ENCODE measurements at regions of chr6 and their contacts with region 1.

Region 1: GRCh38 chr6:168956884-168957730 is 296.5 kb downstream of the THBS2 start:
- DNase-seq: peak; percentile 63 to 76
- H3K4me3 ChIP-seq: no peak overlapping the region
- H3K4me3 Mint-ChIP-seq: no peak overlapping the region
- H3K27ac Mint-ChIP-seq: no peak overlapping the region
- H3K4me1 ChIP-seq: no peaks in the 10 kb centered on the region
- H3K4me1 Mint-ChIP-seq: no peaks in the 10 kb centered on the region
- H3K27me3 ChIP-seq: no peaks in the 10 kb centered on the region
- H3K27me3 Mint-ChIP-seq: peaks cover 7% of the 10 kb centered on the region
- CTCF ChIP-seq: peak; percentile 67 to 81

Region 2: DNA sequence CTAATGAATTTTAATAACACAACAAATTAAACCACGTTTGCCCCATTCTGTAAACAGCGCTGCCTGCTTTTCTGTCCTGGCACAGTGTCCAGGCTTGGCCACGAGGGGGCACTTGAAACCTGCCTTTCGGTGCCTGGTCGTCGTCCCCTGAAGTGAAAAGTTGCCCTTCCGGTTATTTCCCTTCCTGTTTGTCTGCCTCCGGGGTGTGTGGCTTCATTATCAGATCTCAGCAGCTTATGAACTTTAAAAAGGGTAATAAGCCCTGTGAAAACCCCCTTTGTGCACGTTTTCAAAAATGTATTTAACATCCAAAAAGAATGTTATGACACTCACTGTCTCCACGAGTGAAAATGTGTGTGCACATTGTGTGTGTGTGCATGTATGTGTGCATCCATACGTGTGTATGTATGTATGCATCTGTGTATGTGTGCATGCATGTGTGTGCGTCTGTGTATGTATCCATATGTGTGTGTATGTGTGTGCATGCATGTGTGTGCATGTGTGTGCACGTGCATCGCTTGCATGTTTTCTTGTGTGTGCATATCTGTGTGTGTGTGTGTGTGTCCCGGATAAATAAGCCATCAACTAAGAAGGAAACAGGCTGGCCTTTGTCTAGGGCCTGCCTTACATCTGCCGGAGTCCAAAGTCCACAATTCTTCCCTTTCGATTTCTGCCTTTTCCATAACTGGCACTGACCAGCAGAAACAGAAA is 61.9 kb before region 1 on chr6:
- CTCF ChIA-PET with region 1: interaction called, 3 read pairs
- POLR2A ChIA-PET with region 1: no interaction called
- intact Hi-C with region 1: loop called (anchors 1 kb)
- DNase-seq: peak; percentile 83 to 90
- H3K4me3 ChIP-seq: no peak overlapping the region
- H3K4me3 Mint-ChIP-seq: peak overlapping the region; percentile 62
- H3K27ac Mint-ChIP-seq: peak overlapping the region; percentile 68
- H3K4me1 ChIP-seq: peaks cover 6% of the 10 kb centered on the region
- H3K4me1 Mint-ChIP-seq: peaks cover 16% of the 10 kb centered on the region
- H3K27me3 ChIP-seq: no peaks in the 10 kb centered on the region
- H3K27me3 Mint-ChIP-seq: no peaks in the 10 kb centered on the region
- CTCF ChIP-seq: peak; percentile 85 to 89

Region 3: DNA sequence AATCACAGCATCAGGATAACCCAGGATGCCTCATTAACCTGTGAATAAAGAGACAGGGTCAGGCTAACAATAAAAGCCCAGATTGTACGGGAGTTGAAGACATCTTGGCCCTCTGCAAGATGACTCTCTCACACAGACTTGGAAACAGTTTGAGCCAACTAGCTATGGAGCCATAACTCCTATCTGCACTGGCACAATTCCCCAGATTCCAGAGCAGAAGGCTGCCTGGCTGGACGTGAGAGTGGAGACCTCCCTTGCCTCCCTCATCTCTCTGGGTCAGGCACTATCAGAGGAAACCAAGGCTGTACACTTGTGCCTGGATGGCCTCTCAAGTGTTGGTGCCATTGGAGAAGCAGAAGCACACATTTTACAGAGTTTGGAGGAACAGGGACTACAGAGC is 16.1 kb before region 1 on chr6:
- CTCF ChIA-PET with region 1: no interaction called
- POLR2A ChIA-PET with region 1: no interaction called
- intact Hi-C with region 1: no loop called
- DNase-seq: no peak
- H3K4me3 ChIP-seq: no peak overlapping the region
- H3K4me3 Mint-ChIP-seq: no peak overlapping the region
- H3K27ac Mint-ChIP-seq: no peak overlapping the region
- H3K4me1 ChIP-seq: no peaks in the 10 kb centered on the region
- H3K4me1 Mint-ChIP-seq: no peaks in the 10 kb centered on the region
- H3K27me3 ChIP-seq: no peaks in the 10 kb centered on the region
- H3K27me3 Mint-ChIP-seq: peaks cover 12% of the 10 kb centered on the region
- CTCF ChIP-seq: no peak

Region 4: DNA sequence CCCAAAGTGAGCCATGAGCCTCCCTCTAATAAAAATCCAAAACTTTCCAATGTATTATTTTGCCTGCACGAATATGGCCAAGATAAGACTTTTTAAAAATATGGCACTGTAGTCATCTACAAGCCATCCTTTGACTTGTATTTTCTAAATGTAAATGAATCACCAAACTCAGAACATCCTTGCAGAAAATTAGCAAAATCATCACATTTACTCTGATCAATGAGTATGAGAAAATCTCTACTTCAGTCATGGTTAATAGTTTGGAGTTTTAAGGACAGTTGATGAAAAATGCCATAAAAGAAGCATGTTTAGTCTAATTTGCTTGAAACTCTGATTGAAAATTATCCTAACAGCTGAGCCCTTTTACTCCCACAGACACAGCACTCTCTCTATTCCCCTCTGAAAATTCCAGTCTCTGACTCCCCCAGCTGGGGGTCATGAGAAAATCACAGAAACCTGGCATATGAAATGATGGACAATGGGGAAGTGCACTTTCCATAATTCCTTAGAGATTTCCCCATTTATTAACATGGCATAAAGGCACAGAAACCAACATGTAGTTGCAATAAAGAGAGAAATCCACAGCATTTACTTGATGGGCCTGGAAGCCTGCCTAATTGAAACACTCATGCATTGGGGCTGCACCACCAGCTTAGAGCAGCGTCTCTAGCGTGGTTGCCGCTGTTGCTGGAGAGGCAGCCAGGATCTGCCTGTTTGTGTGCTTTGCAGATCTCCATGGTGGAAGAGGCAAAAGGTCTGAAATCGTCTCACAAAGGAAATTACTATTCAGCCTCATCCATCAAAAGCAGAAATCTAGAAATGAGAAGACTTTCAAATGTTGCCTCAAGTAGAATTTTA is 530.7 kb after region 1 on chr6:
- CTCF ChIA-PET with region 1: no interaction called
- POLR2A ChIA-PET with region 1: no interaction called
- intact Hi-C with region 1: loop called (anchors 1 kb)
- DNase-seq: no peak
- H3K4me3 ChIP-seq: no peak overlapping the region
- H3K4me3 Mint-ChIP-seq: no peak overlapping the region
- H3K27ac Mint-ChIP-seq: no peak overlapping the region
- H3K4me1 ChIP-seq: no peaks in the 10 kb centered on the region
- H3K4me1 Mint-ChIP-seq: no peaks in the 10 kb centered on the region
- H3K27me3 ChIP-seq: no peaks in the 10 kb centered on the region
- H3K27me3 Mint-ChIP-seq: no peaks in the 10 kb centered on the region
- CTCF ChIP-seq: peak in 1 of 2 experiments; percentile 10

Region 5: GRCh38 chr6:169639653-169640278 is 682.7 kb after region 1 on chr6:
- CTCF ChIA-PET with region 1: no interaction called
- POLR2A ChIA-PET with region 1: no interaction called
- intact Hi-C with region 1: loop called (anchors 2 kb)
- DNase-seq: peak in 1 of 2 experiments; percentile 21
- H3K4me3 ChIP-seq: no peak overlapping the region
- H3K4me3 Mint-ChIP-seq: no peak overlapping the region
- H3K27ac Mint-ChIP-seq: no peak overlapping the region
- H3K4me1 ChIP-seq: no peaks in the 10 kb centered on the region
- H3K4me1 Mint-ChIP-seq: peaks cover 6% of the 10 kb centered on the region
- H3K27me3 ChIP-seq: no peaks in the 10 kb centered on the region
- H3K27me3 Mint-ChIP-seq: no peaks in the 10 kb centered on the region
- CTCF ChIP-seq: peak in 1 of 2 experiments; percentile 4

Region 6: DNA sequence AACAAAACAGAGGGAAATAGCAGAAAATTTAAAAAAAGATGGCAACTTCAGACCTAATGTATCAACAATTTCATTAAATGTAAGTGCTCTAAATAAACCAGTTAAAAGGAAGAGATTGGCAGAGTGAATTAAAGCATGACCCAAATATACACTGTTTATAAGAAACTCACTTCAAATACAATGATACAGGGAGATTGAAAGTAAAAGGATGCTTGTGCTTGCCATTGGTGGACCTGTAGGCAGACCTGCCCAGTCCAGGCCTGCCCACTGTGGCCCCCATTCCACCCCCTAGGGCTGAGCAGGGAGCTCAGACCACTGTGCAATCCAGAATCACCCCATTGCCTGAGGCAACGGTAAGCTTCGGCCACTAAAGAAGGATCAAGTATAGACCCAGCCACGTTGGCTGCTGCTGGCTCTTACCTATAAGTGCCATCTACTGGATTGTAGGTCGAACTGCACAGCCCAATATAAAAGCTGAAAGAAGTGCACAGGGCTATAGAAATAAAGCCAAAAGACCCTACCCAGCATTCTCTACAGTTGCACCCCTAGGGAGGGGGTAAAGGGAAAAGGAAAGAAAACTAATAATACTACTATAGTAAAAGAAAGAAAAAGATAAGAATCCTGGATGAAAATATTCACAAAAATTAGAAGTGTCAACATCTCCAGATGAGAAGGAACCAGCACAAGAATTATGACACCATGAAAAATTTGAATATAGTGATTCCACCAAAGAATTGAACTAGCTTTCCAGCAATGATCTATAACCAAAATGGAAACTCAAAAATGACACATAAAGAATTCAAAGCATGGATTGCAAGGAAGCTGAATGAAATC is 1559.9 kb after region 1 on chr6:
- CTCF ChIA-PET with region 1: interaction called, 4 read pairs
- POLR2A ChIA-PET with region 1: no interaction called
- intact Hi-C with region 1: loop called (anchors 5 kb)
- DNase-seq: peak; percentile 65 to 72
- H3K4me3 ChIP-seq: no peak overlapping the region
- H3K4me3 Mint-ChIP-seq: no peak overlapping the region
- H3K27ac Mint-ChIP-seq: no peak overlapping the region
- H3K4me1 ChIP-seq: no peaks in the 10 kb centered on the region
- H3K4me1 Mint-ChIP-seq: no peaks in the 10 kb centered on the region
- H3K27me3 ChIP-seq: no peaks in the 10 kb centered on the region
- H3K27me3 Mint-ChIP-seq: no peaks in the 10 kb centered on the region
- CTCF ChIP-seq: peak; percentile 67 to 86